Natural killer cell (primary cell): ENCODE measurements at regions of chr1 and their contacts with region 1.

Region 1: DNA sequence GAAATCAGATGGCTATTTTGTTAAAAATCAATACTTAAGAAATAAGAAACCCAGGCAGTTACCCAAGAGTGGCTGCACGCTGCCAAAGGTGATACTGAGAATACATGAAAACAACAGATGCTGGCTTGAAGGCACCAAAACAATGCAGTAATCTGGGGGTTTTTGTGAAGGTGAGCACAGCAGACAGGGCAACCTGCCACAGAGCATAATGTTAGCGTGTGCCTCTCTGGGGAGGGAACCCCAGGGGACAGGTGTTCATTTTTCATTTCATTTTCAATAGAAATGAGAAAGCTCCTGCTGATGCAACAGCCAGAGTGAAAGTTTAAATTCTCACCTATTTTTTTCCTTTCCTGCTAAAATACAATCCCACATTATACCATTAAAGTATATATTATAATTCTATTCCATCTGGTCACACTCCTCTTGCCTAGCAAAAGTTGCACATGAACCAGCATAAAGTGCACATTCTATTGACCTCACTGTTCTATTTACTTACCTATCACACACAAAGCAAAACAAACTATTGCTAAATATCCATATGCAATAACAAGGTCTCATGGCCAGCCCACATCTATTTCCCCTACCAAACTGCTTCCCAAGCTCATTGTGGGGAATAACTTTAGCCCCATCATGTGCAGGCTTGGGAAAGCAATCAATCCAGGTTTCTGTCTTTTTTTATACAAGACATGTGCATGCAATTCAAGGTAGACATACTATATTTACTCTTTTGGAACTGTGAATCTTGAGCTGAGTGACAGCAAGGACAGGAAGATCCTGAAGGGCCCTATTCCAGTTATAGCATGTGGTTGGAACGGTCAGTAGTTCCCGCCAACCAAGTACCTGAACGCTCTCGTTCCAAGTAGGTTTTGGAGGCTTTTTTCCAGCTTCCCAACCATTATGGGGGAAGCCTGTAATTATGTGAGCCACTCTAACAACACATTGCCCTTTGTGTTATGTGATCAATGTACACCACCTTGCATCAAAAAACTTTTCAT is 173.6 kb downstream of the RERE start:
- DNase-seq: no peak
- ATAC-seq: no peak
- H3K4me3 ChIP-seq: no peak overlapping the region
- H3K4me3 Mint-ChIP-seq: no peak overlapping the region
- H3K27ac ChIP-seq: no peak overlapping the region
- H3K27ac Mint-ChIP-seq: no peak overlapping the region
- H3K4me1 ChIP-seq: no peaks in the 10 kb centered on the region
- H3K4me1 Mint-ChIP-seq: peaks cover 21 to 22% of the 10 kb centered on the region in 2 donors
- H3K27me3 ChIP-seq: no peaks in the 10 kb centered on the region
- H3K27me3 Mint-ChIP-seq: no peaks in the 10 kb centered on the region
- CTCF ChIP-seq: no peak

Region 2: GRCh38 chr1:8302081-8302956 is 341.5 kb before region 1 on chr1:
- intact Hi-C with region 1: no loop called
- DNase-seq: no peak
- ATAC-seq: no peak
- H3K4me3 ChIP-seq: no peak overlapping the region
- H3K4me3 Mint-ChIP-seq: no peak overlapping the region
- H3K27ac ChIP-seq: no peak overlapping the region
- H3K27ac Mint-ChIP-seq: no peak overlapping the region
- H3K4me1 ChIP-seq: no peaks in the 10 kb centered on the region
- H3K4me1 Mint-ChIP-seq: no peaks in the 10 kb centered on the region
- H3K27me3 ChIP-seq: no peaks in the 10 kb centered on the region
- H3K27me3 Mint-ChIP-seq: peaks cover 14 to 19% of the 10 kb centered on the region in 2 donors
- CTCF ChIP-seq: no peak

Region 3: DNA sequence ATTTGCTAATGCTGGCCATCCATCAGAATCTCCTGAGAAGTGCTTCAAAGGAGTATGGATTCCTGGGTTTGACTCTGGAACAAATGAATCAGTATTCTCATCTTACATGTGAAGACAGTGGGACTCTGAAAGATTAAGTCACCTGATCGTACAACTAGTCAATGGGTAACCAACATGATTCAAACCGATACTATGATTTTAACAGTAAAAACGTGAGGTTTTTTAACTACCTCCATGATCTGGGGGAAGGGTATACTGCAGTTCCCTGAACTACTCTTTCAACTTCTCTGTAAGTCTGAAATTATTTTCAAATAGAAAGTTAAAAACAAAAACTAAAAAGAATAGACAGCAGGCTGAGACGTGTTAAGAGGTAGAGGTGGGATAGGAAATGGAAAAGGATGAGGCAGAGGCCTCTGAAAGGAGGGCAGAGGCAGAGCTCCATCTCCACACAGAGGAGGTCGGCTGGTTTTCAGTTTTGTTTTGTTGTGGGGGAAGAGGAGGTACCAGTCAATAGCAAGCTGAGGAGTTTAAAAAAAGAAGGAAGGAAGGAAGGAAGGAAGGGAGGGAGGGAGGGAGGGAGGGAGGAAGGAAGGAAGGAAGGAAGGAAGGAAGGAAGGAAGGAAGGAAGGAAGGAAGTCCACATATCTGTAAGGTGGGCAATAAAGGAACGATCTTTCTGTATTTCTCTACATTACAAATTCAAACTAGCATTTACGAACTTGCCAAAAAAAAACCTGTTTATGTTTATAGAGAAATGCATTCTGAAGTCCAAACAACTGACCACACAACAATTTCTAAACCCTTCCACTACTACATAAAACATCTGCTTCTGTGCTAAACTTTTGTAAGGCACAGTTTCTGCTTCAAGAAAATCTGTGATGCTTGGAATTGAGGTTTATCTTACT is 39.5 kb before region 1 on chr1:
- intact Hi-C with region 1: loop called (anchors 5 kb)
- DNase-seq: peak in 1 of 2 donors; percentile 36
- ATAC-seq: peak; percentile 21 to 61 (median 52)
- H3K4me3 ChIP-seq: no peak overlapping the region
- H3K4me3 Mint-ChIP-seq: peak overlapping the region; percentile 82
- H3K27ac ChIP-seq: peak overlapping the region; percentile 48
- H3K27ac Mint-ChIP-seq: peak overlapping the region; percentile 86 to 94
- H3K4me1 ChIP-seq: peaks cover 22% of the 10 kb centered on the region
- H3K4me1 Mint-ChIP-seq: peaks cover 44% of the 10 kb centered on the region in 2 donors
- H3K27me3 ChIP-seq: no peaks in the 10 kb centered on the region
- H3K27me3 Mint-ChIP-seq: no peaks in the 10 kb centered on the region
- CTCF ChIP-seq: no peak

Region 4: GRCh38 chr1:8625981-8626898 is 17.6 kb before region 1 on chr1:
- intact Hi-C with region 1: no loop called
- DNase-seq: no peak
- ATAC-seq: no peak
- H3K4me3 ChIP-seq: no peak overlapping the region
- H3K4me3 Mint-ChIP-seq: no peak overlapping the region
- H3K27ac ChIP-seq: no peak overlapping the region
- H3K27ac Mint-ChIP-seq: peak overlapping the region; percentile 2 to 15
- H3K4me1 ChIP-seq: peaks cover 10% of the 10 kb centered on the region
- H3K4me1 Mint-ChIP-seq: peaks cover 53 to 56% of the 10 kb centered on the region in 2 donors
- H3K27me3 ChIP-seq: no peaks in the 10 kb centered on the region
- H3K27me3 Mint-ChIP-seq: no peaks in the 10 kb centered on the region
- CTCF ChIP-seq: no peak